Posterior cingulate gyrus (tissue), 11 donors: ENCODE measurements at regions of chr5 and their contacts with region 1.

Region 1: DNA sequence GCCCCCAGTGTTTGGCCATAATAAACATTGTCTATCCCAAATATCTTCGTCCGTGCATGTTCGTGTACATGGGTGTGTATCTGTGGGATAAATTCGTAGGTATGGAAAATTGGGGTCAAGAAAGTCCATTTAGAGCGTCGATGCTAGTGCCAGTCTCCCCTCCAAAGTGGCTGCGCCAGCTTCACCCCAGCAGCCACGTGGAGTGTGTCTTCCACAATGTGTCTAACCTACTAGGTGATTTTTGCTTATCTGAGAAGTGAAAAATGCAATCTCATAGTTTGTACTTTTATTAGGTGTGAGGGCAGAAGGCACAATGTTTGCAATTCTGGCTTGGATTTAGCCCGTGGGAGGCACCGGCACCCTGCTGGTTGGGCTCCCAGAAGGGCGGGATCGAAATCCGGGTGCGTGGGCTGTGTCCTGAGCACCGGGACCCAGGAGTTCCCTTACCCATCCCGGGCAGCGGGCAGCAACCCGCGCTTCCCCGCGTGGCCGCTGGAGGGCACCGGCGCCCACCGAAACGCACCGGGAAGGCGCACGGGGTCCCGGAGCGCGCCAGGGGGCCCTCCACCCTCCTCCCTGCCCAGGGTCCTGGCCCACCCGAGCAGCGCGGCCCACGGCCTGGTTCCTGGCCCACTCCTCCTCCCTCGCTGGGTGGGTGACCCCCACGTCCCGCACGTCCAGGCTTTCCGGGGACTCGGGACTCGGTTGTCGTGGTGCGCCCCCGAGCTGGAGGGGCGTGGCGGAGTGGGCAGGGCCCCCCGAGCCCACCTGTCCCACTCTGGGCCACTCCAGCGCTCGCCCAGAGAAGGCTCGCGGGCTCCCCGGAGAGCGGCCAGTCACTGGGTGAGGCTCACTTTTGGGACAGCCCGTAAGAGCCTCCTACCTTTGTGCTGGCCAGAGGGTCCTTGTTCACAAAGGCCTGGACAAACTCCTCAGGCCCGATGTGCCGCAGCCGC is 55.4 kb upstream of the RNF130 start:
- DNase-seq: peak in 7 of 10 donors; percentile 50 to 93 (median 70)

Region 2: DNA sequence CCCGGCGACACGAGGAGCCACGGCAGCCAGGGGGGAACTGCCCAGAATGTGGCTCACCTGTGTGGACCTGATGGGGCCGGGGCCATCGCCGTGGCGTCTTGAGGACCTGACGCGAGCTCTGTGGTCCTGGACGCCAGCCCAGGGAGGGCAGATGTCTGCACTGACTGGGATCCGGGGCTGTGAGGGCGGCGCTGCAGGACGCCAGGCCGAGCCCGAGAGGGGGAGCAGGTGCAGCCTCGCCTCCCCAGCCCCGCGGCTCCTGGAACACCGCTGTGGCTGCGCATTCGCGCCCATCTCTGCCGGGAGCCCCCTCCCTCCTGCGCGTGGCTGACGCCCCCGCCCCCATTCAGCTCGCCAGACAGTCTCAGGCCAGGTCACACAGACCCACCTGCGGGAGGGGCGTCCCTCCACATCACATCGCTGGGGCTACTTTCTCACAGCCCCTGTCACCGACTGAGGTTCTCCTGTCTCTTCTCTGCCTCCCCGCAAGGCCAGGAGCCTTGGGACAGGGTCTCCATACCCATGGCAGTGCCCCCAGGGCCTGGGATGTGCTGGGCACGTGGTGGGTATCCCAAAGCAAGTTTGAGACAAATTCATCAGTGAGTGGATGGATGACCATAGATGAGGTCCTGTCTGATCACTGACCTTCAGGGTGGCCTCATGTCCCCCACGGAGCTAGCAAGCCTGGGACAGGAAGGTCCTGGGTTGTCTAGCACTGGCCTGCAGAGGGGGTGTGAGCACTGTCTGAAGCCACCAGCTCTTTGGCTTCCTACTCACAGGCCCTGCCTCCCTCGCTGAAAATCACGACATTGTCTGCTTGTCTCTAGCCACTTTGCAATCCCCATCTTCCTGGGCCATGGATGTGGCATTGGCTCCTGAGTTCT is 34.7 kb after region 1 on chr5:
- intact Hi-C with region 1: loop called (anchors 5 kb)
- DNase-seq: peak in 5 of 10 donors; percentile 36 to 95 (median 67)

Region 3: GRCh38 chr5:180209137-180209581 is 82.2 kb after region 1 on chr5 and contains the start of gene RASGEF1C:
- intact Hi-C with region 1: loop called (anchors 2 kb)
- DNase-seq: peak in 9 of 10 donors; percentile 39 to 95 (median 66)

Region 4: DNA sequence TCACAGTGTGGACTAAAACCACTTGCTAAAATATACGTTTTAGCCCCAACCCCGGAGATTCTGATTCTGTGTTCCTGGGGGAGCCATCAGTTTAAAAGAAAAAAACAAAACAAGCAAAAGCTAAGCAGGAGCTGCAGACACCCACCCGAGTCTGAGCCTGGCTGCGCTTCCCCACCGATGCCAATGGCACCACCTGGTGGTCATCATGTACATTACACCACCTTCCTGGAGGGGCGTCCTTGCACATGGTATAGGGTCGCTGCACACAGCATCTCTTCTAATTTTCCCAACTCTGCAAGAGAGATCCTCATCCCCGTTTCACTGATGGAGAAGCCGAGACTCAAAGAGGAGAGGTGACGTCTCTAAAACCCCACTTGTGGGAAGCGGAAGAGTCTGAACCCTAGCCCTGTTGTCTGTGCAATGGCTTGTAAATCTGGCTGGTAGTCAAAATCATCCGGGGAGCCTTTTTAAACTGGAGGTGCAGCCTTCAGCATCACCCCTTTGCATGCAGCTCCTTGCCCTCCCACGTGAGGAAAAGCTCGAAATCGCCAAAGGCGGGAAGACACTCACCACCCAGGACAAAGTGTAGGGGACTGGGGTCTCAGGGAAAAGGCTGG is 344.1 kb after region 1 on chr5:
- intact Hi-C with region 1: loop called (anchors 5 kb)
- DNase-seq: peak in 9 of 10 donors; percentile 52 to 95 (median 75)